Heart right ventricle (tissue), 16 donors: ENCODE measurements at regions of chr13 and their contacts with region 1.

Region 1: DNA sequence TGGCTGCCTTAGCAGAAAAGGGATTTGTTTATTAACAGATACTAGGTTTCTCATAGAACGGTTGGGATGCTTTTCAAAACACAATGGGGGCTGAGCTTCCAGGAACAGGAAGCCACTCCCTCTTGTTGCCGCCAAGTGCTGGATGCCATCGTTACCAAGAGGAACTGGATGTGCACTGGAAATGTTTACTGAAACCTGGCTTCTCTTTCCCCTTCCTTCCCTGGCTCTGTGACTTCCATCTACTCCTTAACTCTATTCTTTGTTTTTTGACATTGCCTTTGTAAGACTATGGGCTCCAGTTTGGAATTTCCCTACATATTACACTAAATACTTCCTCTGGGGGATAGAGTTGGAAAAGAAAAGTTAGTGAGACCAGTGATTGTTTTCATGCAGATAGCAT is 11.7 kb upstream of the KL start:
- DNase-seq: peak; percentile 43 to 68
- ATAC-seq: peak; percentile 55 to 90 (median 87)
- H3K4me3 ChIP-seq: no peak overlapping the region
- H3K27ac ChIP-seq: peak overlapping the region; percentile 39 to 84 (median 60)
- H3K4me1 ChIP-seq: peaks cover 0 to 33% (median 18%) of the 10 kb centered on the region in 9 donors
- H3K27me3 ChIP-seq: no peaks in the 10 kb centered on the region
- CTCF ChIP-seq: no peak

Region 2: GRCh38 chr13:32940601-32941000 is 63.9 kb before region 1 on chr13:
- intact Hi-C with region 1: loop called in 1 of 10 experiments (anchors 10 kb)
- DNase-seq: peak; percentile 21 to 46
- ATAC-seq: peak; percentile 37 to 76 (median 68)
- H3K4me3 ChIP-seq: no peak overlapping the region
- H3K27ac ChIP-seq: no peak overlapping the region
- H3K4me1 ChIP-seq: peaks cover 0 to 10% (median 3%) of the 10 kb centered on the region in 9 donors
- H3K27me3 ChIP-seq: no peaks in the 10 kb centered on the region
- CTCF ChIP-seq: no peak

Region 3: DNA sequence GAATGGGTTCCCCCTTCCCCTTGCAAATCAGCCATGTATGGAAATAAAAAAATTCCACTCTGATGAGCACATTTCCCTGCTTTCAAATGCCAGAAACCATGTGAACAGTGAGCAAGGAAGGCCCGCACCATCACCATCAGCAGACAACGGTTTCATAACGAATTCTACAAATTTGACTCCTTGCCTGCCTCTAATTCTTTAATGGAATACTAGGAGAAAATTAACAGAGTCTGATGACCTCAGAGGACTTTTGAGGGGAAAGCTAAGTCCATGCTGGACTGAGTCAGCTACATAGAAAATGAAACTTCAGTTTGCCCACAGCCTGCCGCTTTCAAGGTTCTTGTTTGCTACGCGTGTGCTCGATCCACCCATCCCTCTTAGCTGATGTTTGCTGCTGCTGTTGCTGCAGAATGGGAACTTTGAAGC is 35.0 kb before region 1 on chr13:
- intact Hi-C with region 1: loop called in 1 of 10 experiments (anchors 5 kb)
- DNase-seq: peak in 1 of 2 donors; percentile 29
- ATAC-seq: peak in 7 of 8 donors; percentile 78 to 88 (median 84)
- H3K4me3 ChIP-seq: peak overlapping the region in 7 of 10 donors; percentile 12 to 40 (median 33)
- H3K27ac ChIP-seq: peak overlapping the region; percentile 27 to 90 (median 78)
- H3K4me1 ChIP-seq: peaks cover 0 to 28% (median 18%) of the 10 kb centered on the region in 9 donors
- H3K27me3 ChIP-seq: no peaks in the 10 kb centered on the region
- CTCF ChIP-seq: no peak

Region 4: DNA sequence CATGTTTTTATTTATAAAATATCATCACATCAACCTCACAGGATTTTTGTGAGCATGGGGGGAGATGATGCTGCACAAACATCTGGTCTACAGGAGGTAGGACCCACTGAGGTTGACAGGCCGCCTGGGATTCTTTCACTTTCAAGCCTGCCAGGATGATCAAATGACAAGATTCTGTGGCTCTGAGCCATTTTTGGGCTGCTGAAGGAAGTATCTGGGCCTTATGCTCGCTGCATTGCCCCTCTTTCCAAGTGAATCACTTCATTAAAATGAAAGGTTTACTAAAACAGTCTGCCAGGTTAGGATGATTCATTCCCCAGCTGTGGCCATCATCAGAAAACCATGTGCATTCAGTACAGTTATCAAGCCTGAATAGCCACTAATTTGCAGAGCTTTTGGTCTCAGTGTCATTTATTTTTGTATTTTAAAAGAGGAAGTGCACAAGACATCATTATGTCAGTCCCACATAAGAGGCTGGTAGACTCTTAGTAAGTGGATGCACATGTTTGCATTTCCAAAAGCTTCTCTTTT is 246.7 kb after region 1 on chr13:
- intact Hi-C with region 1: no loop called
- DNase-seq: peak in 1 of 2 donors; percentile 46
- ATAC-seq: peak; percentile 4 to 75 (median 50)
- H3K4me3 ChIP-seq: no peak overlapping the region
- H3K27ac ChIP-seq: peak overlapping the region; percentile 47 to 88 (median 76)
- H3K4me1 ChIP-seq: peaks cover 11 to 80% (median 59%) of the 10 kb centered on the region in 9 donors
- H3K27me3 ChIP-seq: no peaks in the 10 kb centered on the region
- CTCF ChIP-seq: no peak

Region 5: GRCh38 chr13:33577007-33577406 is 572.5 kb after region 1 on chr13:
- intact Hi-C with region 1: no loop called
- DNase-seq: no peak
- ATAC-seq: peak in 1 of 8 donors; percentile 24
- H3K4me3 ChIP-seq: no peak overlapping the region
- H3K27ac ChIP-seq: peak overlapping the region in 1 of 10 donors; percentile 3
- H3K4me1 ChIP-seq: peaks cover 0 to 15% (median 8%) of the 10 kb centered on the region in 9 donors
- H3K27me3 ChIP-seq: no peaks in the 10 kb centered on the region
- CTCF ChIP-seq: no peak

Region 6: GRCh38 chr13:34277936-34278335 is 1273.4 kb after region 1 on chr13:
- intact Hi-C with region 1: no loop called
- DNase-seq: no peak
- ATAC-seq: no peak
- H3K4me3 ChIP-seq: no peak overlapping the region
- H3K27ac ChIP-seq: no peak overlapping the region
- H3K4me1 ChIP-seq: peaks cover 0 to 8% (median 0%) of the 10 kb centered on the region in 9 donors
- H3K27me3 ChIP-seq: no peaks in the 10 kb centered on the region
- CTCF ChIP-seq: no peak